Activated T-helper 1 cell treated with anti-CD3 and anti-CD28 coated beads, Interleukin-12 subunit alpha, Interleukin-12 subunit beta, Interleukin-2, Interleukin-4 antibody, amounts not matched to agents 30 ng/mL and 10 ng/mL and 1 ng/mL, durations not matched to agents 14 hours and 24 hours and 36 hours (primary cell): ENCODE measurements at regions of chr1 and their contacts with region 1.

Region 1: GRCh38 chr1:9234223-9235095 is at the start of gene H6PD:
- DNase-seq: peak; percentile 82
- H3K4me3 Mint-ChIP-seq: peak within 1 kb of the TSS; percentile 94
- H3K27ac Mint-ChIP-seq: peak within 1 kb of the TSS; percentile 98
- H3K4me1 Mint-ChIP-seq: peaks cover 36% of the 10 kb centered on the region
- H3K27me3 Mint-ChIP-seq: peaks cover 3% of the 10 kb centered on the region
- total RNA-seq, gene H6PD: 15.7 TPM in 2 replicates

Region 2: GRCh38 chr1:9018333-9018732 is 216.1 kb before region 1 on chr1:
- intact Hi-C with region 1: no loop called
- DNase-seq: no peak
- H3K4me3 Mint-ChIP-seq: no peak overlapping the region
- H3K27ac Mint-ChIP-seq: no peak overlapping the region
- H3K4me1 Mint-ChIP-seq: no peaks in the 10 kb centered on the region
- H3K27me3 Mint-ChIP-seq: peaks cover 19% of the 10 kb centered on the region

Region 3: GRCh38 chr1:9128520-9129265 is 105.8 kb before region 1 on chr1 and contains the start of gene GPR157:
- intact Hi-C with region 1: loop called (anchors 1 kb)
- DNase-seq: peak; percentile 70
- H3K4me3 Mint-ChIP-seq: peak within 1 kb of the TSS; percentile 83
- H3K27ac Mint-ChIP-seq: peak within 1 kb of the TSS; percentile 68
- H3K4me1 Mint-ChIP-seq: peaks cover 26% of the 10 kb centered on the region
- H3K27me3 Mint-ChIP-seq: peaks cover 12% of the 10 kb centered on the region
- total RNA-seq, gene GPR157: 2.8 and 3.8 TPM in 2 replicates

Region 4: GRCh38 chr1:9181176-9181906 is 53.1 kb before region 1 on chr1:
- intact Hi-C with region 1: loop called (anchors 2 kb)
- DNase-seq: peak; percentile 66
- H3K4me3 Mint-ChIP-seq: peak overlapping the region; percentile 90
- H3K27ac Mint-ChIP-seq: peak overlapping the region; percentile 85
- H3K4me1 Mint-ChIP-seq: peaks cover 22% of the 10 kb centered on the region
- H3K27me3 Mint-ChIP-seq: peaks cover 11% of the 10 kb centered on the region

Region 5: DNA sequence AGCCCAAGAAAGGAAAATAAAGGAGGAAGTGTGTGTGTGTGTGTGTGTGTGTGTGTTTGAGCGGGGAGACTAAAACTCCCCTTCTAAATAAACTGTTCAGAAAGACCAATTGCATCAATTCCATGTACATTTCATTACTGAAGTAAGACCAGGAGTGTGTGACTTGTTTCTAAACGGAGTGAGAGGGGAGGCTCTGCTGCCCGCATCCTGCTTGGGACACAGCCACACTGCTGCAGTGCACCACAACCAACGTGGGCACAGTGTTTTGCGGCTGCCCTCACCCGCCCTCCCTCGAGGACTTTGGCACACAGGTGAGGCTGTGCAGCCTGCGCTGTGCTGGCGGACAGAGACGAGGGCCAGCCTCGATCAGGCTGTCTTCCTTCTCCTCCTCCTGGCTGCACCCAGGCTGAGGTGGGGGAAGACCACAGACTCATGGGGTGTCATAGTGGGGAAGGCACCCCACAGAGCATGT is 30.9 kb before region 1 on chr1:
- intact Hi-C with region 1: loop called (anchors 1 kb)
- DNase-seq: no peak
- H3K4me3 Mint-ChIP-seq: no peak overlapping the region
- H3K27ac Mint-ChIP-seq: no peak overlapping the region
- H3K4me1 Mint-ChIP-seq: peaks cover 30% of the 10 kb centered on the region
- H3K27me3 Mint-ChIP-seq: peaks cover 70% of the 10 kb centered on the region